ENCODE measurements at regions of chr13 and their contacts with region 1.

Region 1: GRCh38 chr13:74990992-74991391 is 491.0 kb downstream of the TBC1D4 start:
- DNase-seq: no peak
- H3K4me3 ChIP-seq: no peak overlapping the region
- H3K27ac ChIP-seq: no peak overlapping the region
- H3K4me1 ChIP-seq: no peaks in the 10 kb centered on the region
- H3K27me3 ChIP-seq: no peaks in the 10 kb centered on the region
- CTCF ChIP-seq: no peak
- POLR2A ChIP-seq: no peak

Region 2: GRCh38 chr13:74687442-74688182 is 303.4 kb before region 1 on chr13:
- intact Hi-C with region 1: loop called (anchors 5 kb)
- DNase-seq: no peak
- H3K4me3 ChIP-seq: no peak overlapping the region
- H3K27ac ChIP-seq: no peak overlapping the region
- H3K4me1 ChIP-seq: no peaks in the 10 kb centered on the region
- H3K27me3 ChIP-seq: no peaks in the 10 kb centered on the region
- CTCF ChIP-seq: no peak
- POLR2A ChIP-seq: no peak

Measured in breast epithelium (tissue), 4 donors.